ENCODE measurements at regions of chr22 and their contacts with region 1.

Region 1: GRCh38 chr22:39152511-39153219 is at the start of gene CBX7:
- DNase-seq: peak; percentile 80

Region 2: DNA sequence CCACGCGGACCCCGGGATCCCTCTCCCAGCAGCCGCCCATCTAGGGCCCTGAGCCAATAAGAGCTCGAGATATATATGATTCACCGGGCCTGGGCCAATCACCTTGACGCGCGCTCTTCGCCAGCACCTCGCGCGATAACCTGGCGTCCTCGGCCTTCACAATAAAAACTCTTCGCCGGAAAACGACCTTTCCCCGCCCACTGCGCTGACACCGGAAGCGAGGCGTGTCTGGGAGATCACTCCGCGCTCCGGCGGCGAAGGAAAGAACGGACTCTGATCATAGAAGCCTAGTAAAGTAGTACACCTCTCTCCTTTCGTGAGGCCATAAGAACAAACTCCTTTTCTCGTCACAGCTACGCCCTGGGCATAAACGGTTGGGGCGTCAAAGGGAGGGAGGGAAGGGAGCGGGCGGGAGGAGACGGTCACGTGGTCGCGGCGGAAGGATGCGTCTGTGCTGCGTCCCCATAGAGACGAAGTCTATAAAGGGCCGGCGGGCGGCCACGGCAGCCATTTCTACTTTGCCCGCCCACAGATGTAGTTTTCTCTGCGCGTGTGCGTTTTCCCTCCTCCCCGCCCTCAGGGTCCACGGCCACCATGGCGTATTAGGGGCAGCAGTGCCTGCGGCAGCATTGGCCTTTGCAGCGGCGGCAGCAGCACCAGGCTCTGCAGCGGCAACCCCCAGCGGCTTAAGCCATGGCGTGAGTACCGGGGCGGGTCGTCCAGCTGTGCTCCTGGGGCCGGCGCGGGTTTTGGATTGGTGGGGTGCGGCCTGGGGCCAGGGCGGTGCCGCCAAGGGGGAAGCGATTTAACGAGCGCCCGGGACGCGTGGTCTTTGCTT is 367.6 kb after region 1 on chr22 and contains the start of gene ATF4:
- in situ Hi-C with region 1: loop called (anchors 25 kb)
- DNase-seq: peak; percentile 98